Left ventricle myocardium inferior (tissue), 1 donor: ENCODE measurements at regions of chr20 and their contacts with region 1.

Region 1: GRCh38 chr20:35111141-35111888 is 18.7 kb upstream of the TRPC4AP start:
- DNase-seq: no peak
- H3K4me3 ChIP-seq: no peak overlapping the region
- H3K27ac ChIP-seq: peak overlapping the region; percentile 53
- H3K4me1 ChIP-seq: peaks cover 17% of the 10 kb centered on the region
- H3K27me3 ChIP-seq: no peaks in the 10 kb centered on the region
- CTCF ChIP-seq: no peak

Region 2: GRCh38 chr20:35030136-35030535 is 81.2 kb before region 1 on chr20:
- intact Hi-C with region 1: no loop called
- DNase-seq: no peak
- H3K4me3 ChIP-seq: no peak overlapping the region
- H3K27ac ChIP-seq: no peak overlapping the region
- H3K4me1 ChIP-seq: no peaks in the 10 kb centered on the region
- H3K27me3 ChIP-seq: no peaks in the 10 kb centered on the region
- CTCF ChIP-seq: no peak

Region 3: DNA sequence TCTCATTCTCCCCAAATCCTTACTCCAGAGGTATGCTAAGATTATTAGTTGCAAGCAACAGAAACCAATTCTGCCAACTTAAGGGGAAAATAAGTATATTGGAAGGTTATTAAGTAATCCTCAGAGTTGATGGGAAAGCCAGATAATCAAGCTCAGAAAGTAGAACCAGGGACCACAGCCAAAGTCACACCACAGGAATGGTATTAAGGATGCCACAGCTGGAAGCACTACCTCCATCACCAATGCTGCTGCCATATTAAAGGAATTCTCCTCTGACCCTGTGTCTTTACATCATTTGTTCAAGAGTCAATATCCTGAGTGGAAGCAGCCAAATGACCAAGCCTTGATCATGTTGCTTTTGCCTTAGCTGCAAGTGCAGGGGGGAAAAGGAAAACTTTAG is 70.4 kb after region 1 on chr20:
- intact Hi-C with region 1: loop called (anchors 10 kb)
- DNase-seq: no peak
- H3K4me3 ChIP-seq: no peak overlapping the region
- H3K27ac ChIP-seq: no peak overlapping the region
- H3K4me1 ChIP-seq: no peaks in the 10 kb centered on the region
- H3K27me3 ChIP-seq: no peaks in the 10 kb centered on the region
- CTCF ChIP-seq: no peak